ENCODE measurements at regions of chr5 and their contacts with region 1.

Region 1: GRCh38 chr5:75574791-75575190 is 36.5 kb upstream of the ANKDD1B start:
- DNase-seq: no peak
- CTCF ChIP-seq: no peak

Region 2: GRCh38 chr5:75405296-75405695 is 169.5 kb before region 1 on chr5:
- in situ Hi-C with region 1: no loop called
- DNase-seq: no peak
- CTCF ChIP-seq: no peak

Region 3: DNA sequence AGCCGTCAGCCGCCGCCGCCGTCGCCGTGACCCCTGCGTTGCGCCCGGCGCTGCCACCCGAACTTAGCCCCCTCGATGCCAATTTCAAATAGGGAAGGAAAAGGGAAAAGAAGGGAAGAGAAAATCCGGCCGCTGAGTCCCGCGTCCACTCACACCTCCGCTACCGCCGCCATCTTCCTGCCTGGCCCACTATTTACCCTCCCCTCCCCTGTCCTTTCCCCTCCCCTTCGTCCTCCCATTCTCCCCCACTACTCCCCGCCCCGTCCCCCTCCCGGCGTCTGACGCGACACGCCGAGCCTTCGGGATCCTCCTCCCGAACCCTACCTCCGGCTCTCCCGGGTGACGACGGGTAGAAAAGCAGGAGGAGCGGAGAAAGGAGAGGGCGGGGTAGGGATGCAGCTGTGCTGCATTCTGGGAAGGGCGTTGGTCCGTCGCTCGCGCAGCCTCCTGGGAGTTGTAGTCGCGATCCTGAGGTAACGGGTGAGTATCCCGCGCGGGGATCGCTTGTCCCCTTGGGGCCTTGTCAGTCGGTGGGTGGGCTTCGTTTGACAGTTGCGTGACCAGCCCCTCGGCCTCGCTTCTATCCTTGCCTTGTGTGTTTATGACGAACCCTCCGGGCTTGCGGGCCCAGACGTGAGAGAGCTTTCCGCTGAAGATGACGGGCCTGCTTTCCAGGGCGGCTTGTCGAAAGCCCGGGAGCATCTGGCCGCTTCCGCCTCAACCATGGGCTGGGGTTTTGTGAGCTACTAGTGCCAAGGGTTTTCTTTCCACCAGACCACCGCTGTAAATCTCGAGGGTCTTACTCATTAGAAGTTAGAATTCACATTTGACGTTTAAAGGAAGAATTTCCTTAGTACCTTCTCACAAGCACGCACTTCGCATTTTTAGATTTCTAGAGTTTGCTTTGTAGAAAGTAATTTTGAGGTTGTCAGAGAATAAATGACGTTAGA is 63.1 kb before region 1 on chr5 and contains the starts of genes CERT1 and POLK:
- in situ Hi-C with region 1: loop called (anchors 5 kb)
- DNase-seq: peak; percentile 95
- CTCF ChIP-seq: no peak

Region 4: GRCh38 chr5:75847561-75848021 is 272.8 kb after region 1 on chr5:
- in situ Hi-C with region 1: no loop called
- DNase-seq: peak; percentile 57
- CTCF ChIP-seq: no peak